Mammary epithelial cell (primary cell): ENCODE measurements at regions of chr1 and their contacts with region 1.

Region 1: GRCh38 chr1:118151312-118151937 is 33.6 kb downstream of the SPAG17 start:
- DNase-seq: peak; percentile 29
- H3K4me3 ChIP-seq: no peak overlapping the region
- H3K27ac ChIP-seq: no peak overlapping the region
- H3K4me1 ChIP-seq: peaks cover 6% of the 10 kb centered on the region
- H3K27me3 ChIP-seq: no peaks in the 10 kb centered on the region
- CTCF ChIP-seq: peak; percentile 70 to 76

Region 2: DNA sequence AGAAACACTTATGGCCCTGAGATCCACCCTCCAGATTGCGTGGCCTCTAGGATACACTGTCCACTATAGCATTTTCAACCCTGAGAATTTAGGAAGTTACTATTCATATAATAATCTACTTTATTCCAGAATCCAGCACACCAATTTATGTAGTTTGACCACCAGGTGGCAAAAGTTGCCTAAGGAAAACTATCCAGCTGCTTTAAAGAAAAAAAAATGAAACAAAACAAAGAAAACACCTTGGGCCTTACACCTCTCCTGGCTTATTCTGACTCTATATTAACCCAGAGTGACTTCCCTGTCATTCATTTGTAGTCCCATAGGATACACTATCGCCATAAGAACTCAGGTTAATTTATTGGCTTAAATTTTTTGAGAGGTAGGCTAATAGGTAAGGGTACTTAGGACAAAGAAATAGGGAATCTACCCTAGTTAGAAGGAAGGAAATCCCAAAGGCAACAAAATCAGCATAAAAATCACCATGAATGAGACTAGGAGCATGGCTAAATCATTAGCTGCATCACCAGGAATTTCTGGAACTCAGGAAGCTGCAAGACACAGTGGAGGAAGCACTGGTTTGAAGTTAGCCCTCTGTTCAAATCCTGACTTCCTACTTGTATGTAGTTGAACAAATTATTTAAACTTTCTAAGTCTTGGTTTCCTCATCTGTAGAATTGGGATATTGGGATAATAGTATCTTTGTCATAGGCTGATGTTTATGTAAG is 73.9 kb before region 1 on chr1:
- CTCF ChIA-PET with region 1: no interaction called
- dilution Hi-C with region 1: no loop called
- in situ Hi-C with region 1: no loop called
- intact Hi-C with region 1: loop called (anchors 1 kb)
- DNase-seq: peak; percentile 28
- H3K4me3 ChIP-seq: no peak overlapping the region
- H3K27ac ChIP-seq: no peak overlapping the region
- H3K4me1 ChIP-seq: no peaks in the 10 kb centered on the region
- H3K27me3 ChIP-seq: peaks cover 2% of the 10 kb centered on the region
- CTCF ChIP-seq: peak; percentile 44 to 61

Region 3: GRCh38 chr1:118304722-118305359 is 153.4 kb after region 1 on chr1:
- CTCF ChIA-PET with region 1: no interaction called
- dilution Hi-C with region 1: no loop called
- in situ Hi-C with region 1: no loop called
- intact Hi-C with region 1: loop called (anchors 2 kb)
- DNase-seq: no peak
- H3K4me3 ChIP-seq: no peak overlapping the region
- H3K27ac ChIP-seq: no peak overlapping the region
- H3K4me1 ChIP-seq: no peaks in the 10 kb centered on the region
- H3K27me3 ChIP-seq: no peaks in the 10 kb centered on the region
- CTCF ChIP-seq: peak; percentile 74

Region 4: GRCh38 chr1:118485757-118486156 is 334.3 kb after region 1 on chr1:
- CTCF ChIA-PET with region 1: no interaction called
- dilution Hi-C with region 1: no loop called
- in situ Hi-C with region 1: no loop called
- intact Hi-C with region 1: loop called (anchors 10 kb)
- DNase-seq: peak; percentile 74
- H3K4me3 ChIP-seq: peak overlapping the region in 1 of 3 experiments; percentile 11
- H3K27ac ChIP-seq: peak overlapping the region; percentile 33
- H3K4me1 ChIP-seq: peaks cover 18% of the 10 kb centered on the region
- H3K27me3 ChIP-seq: no peaks in the 10 kb centered on the region
- CTCF ChIP-seq: no peak

Region 5: DNA sequence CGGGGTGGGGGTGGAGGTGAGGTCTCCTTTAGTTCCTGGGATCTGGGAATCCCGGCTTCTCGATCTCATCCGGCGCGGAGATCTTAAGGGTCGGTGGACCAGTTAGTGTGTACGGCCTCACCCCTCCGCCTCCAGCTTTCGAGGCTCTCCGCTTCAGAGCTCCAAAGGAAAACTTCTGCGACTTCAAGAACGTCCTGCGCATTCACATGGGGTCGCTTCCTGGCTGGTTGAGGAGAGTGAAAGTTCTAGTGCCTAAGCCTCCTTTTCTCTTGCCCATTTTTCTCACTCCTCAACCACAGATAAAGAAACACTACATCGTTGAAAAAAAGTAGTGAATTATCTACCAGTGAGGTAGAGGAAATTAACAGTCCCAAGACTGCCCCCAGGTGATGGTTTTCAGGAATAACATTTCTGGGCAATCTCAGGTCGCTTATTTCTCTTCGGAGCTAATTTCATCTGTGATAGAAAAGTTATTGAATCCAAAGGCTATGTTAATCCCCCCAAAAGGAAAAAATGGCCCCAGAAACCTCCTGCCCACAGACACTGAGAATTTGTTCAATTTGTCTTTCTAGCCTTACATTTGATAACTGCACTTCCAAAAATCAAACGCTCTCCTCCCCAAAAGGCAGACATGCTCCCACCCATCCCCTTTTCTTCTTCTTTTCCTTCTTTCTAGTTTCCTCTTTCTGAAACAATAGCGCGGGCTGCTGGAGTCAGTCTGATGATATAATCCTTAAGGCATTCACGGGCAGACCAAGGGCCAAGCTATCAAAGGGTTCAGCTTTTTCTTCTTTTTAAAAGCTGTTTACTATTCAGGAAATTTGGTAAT is 857.3 kb after region 1 on chr1:
- CTCF ChIA-PET with region 1: no interaction called
- dilution Hi-C with region 1: no loop called
- in situ Hi-C with region 1: loop called (anchors 25 kb)
- intact Hi-C with region 1: loop called (anchors 1 kb)
- DNase-seq: peak; percentile 32
- H3K4me3 ChIP-seq: no peak overlapping the region
- H3K27ac ChIP-seq: no peak overlapping the region
- H3K4me1 ChIP-seq: peaks cover 38% of the 10 kb centered on the region
- H3K27me3 ChIP-seq: peaks cover 12% of the 10 kb centered on the region
- CTCF ChIP-seq: peak; percentile 47 to 55

Region 6: GRCh38 chr1:119275145-119276134 is 1124.0 kb after region 1 on chr1:
- CTCF ChIA-PET with region 1: no interaction called
- dilution Hi-C with region 1: no loop called
- in situ Hi-C with region 1: no loop called
- intact Hi-C with region 1: loop called (anchors 2 kb)
- DNase-seq: peak; percentile 53
- H3K4me3 ChIP-seq: no peak overlapping the region
- H3K27ac ChIP-seq: no peak overlapping the region
- H3K4me1 ChIP-seq: peaks cover 21% of the 10 kb centered on the region
- H3K27me3 ChIP-seq: no peaks in the 10 kb centered on the region
- CTCF ChIP-seq: peak; percentile 93 to 98